AG04449 (cell line): ENCODE measurements at regions of chr1 and their contacts with region 1.

Region 1: GRCh38 chr1:212070720-212071302 is 35.3 kb downstream of the DTL start:
- DNase-seq: no peak
- H3K4me3 ChIP-seq: no peak overlapping the region
- CTCF ChIP-seq: peak; percentile 53

Region 2: GRCh38 chr1:211885747-211886522 is 184.9 kb before region 1 on chr1:
- CTCF ChIA-PET with region 1: no interaction called
- POLR2A ChIA-PET with region 1: no interaction called
- DNase-seq: no peak
- H3K4me3 ChIP-seq: no peak overlapping the region
- CTCF ChIP-seq: no peak

Region 3: DNA sequence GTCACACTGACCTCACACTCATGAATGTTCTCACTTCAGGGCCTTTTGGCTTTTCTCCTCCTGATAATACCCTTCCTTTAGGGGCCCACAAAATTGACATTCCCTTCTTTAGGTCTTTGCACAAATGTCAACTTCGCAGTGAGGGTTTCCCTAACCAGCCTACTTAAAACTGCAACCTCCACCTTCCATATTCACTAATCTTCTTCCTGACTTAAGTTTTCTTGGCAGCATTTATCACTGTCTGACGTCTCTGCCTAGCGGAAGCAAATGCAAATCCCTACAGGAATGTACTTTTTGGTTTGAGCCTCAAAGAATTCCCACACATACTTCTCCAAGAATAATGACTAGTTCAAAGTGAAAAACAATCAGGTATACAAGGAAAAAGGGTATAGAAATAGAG is 68.3 kb before region 1 on chr1:
- CTCF ChIA-PET with region 1: no interaction called
- POLR2A ChIA-PET with region 1: no interaction called
- DNase-seq: no peak
- H3K4me3 ChIP-seq: no peak overlapping the region
- CTCF ChIP-seq: no peak

Region 4: GRCh38 chr1:212021563-212021962 is 49.2 kb before region 1 on chr1:
- CTCF ChIA-PET with region 1: no interaction called
- POLR2A ChIA-PET with region 1: no interaction called
- DNase-seq: no peak
- H3K4me3 ChIP-seq: no peak overlapping the region
- CTCF ChIP-seq: no peak

Region 5: DNA sequence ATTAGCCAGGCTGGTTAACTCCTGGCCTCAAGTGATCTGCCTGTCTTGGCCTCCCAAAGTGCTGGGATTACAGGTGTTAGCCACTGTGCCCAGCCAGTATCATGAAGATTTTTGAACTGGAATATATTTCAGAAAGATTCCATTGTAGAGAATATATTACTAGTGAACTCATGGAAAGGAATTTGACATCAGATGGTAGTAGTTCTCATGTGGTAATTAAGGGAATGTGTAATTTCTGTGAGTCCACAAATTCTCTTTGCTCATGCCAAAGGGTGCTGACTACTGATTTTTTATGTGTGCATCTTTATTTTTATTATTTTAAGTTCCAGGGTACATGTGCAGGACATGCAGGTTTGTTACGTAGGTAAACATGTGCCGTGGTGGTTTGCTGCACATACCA is 24.8 kb before region 1 on chr1:
- CTCF ChIA-PET with region 1: interaction called, 10 read pairs
- POLR2A ChIA-PET with region 1: no interaction called
- DNase-seq: no peak
- H3K4me3 ChIP-seq: no peak overlapping the region
- CTCF ChIP-seq: no peak

Region 6: GRCh38 chr1:212089560-212090163 is 18.9 kb after region 1 on chr1:
- CTCF ChIA-PET with region 1: interaction called, 33 read pairs
- POLR2A ChIA-PET with region 1: no interaction called
- DNase-seq: no peak
- H3K4me3 ChIP-seq: no peak overlapping the region
- CTCF ChIP-seq: no peak

Region 7: DNA sequence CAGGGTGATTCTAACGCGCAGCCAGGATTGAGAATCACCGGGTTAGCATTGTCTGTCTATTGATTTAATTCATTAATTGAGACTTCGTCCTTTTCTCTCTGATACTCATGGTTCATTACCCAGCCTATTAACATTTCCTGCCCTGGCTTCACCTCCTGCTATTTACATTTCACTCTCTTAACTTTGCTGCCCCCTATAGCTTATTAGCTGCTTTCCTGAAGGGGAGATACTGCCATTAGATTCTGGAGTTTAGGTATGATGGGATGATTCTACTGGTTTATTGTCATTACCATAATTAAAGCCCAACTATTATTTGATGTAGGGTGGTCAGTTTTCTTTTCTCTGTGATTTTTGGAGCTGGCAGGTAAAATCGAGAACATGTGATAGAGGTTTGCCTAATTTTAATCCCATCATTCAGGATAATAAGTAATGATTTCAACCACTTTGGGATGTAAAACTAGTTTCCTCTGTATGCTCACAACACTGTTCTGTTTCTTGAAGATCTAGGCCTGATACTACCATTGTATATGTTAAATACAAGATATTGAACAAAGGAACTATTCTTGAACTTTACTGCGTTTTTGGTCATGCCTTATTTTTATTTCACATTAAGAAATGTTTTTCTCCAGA is 220.8 kb after region 1 on chr1:
- CTCF ChIA-PET with region 1: interaction called, 179 read pairs
- POLR2A ChIA-PET with region 1: interaction called, 8 read pairs
- DNase-seq: no peak
- H3K4me3 ChIP-seq: no peak overlapping the region
- CTCF ChIP-seq: peak; percentile 57

Region 8: GRCh38 chr1:212368073-212368484 is 297.3 kb after region 1 on chr1:
- CTCF ChIA-PET with region 1: interaction called, 302 read pairs
- POLR2A ChIA-PET with region 1: no interaction called
- DNase-seq: peak; percentile 23
- H3K4me3 ChIP-seq: no peak overlapping the region
- CTCF ChIP-seq: peak; percentile 81

Region 9: GRCh38 chr1:212463565-212464285 is 392.9 kb after region 1 on chr1:
- CTCF ChIA-PET with region 1: interaction called, 279 read pairs
- POLR2A ChIA-PET with region 1: no interaction called
- DNase-seq: no peak
- H3K4me3 ChIP-seq: no peak overlapping the region
- CTCF ChIP-seq: no peak